PC-9 (cell line): ENCODE measurements at regions of chr12 and their contacts with region 1.

Region 1: GRCh38 chr12:106581543-106582248 is 1.1 kb upstream of the RFX4 start:
- DNase-seq: no peak
- H3K4me3 ChIP-seq: no peak overlapping the region
- H3K27ac ChIP-seq: no peak overlapping the region
- H3K4me1 ChIP-seq: no peaks in the 10 kb centered on the region
- H3K27me3 ChIP-seq: peaks cover 46% of the 10 kb centered on the region
- CTCF ChIP-seq: no peak

Region 2: DNA sequence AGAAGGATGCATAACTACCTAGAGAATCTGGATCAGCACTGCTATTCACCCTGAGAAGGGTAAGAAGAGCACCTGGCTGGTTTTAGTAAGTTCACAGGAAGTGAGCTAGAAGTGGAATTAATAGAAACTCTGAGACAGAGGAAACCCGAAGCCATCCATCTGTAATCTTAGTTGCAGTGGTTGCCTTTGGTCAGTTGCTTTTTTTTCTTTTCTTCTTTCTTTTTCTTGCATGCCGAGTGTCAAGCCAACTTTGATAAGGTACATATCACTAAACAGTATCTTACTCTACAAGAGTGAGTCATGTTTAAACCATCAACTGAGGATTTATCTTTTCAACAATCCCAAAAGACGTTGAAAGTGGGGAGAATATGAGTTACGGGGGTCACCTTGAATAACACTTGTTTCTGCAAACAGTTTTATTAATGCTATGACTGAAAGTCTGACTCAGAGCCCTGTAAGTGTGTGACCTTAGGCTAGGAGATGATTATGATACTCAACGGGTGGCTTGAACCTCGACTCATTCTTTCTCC is 1224.5 kb before region 1 on chr12:
- CTCF ChIA-PET with region 1: no interaction called
- POLR2A ChIA-PET with region 1: interaction called, 12 read pairs
- intact Hi-C with region 1: no loop called
- DNase-seq: no peak
- H3K4me3 ChIP-seq: no peak overlapping the region
- H3K27ac ChIP-seq: no peak overlapping the region
- H3K4me1 ChIP-seq: no peaks in the 10 kb centered on the region
- H3K27me3 ChIP-seq: 0 out of 2 replicates have a peak, but pooled peaks cover 14% of the 10 kb centered on the region
- CTCF ChIP-seq: no peak